B cell (primary cell): ENCODE measurements at regions of chr12 and their contacts with region 1.

Region 1: GRCh38 chr12:79997096-79997791 is 62.3 kb upstream of the PPP1R12A start:
- DNase-seq: peak; percentile 64
- ATAC-seq: peak; percentile 67
- H3K4me3 ChIP-seq: no peak overlapping the region
- H3K4me3 Mint-ChIP-seq: no peak overlapping the region
- H3K27ac ChIP-seq: no peak overlapping the region
- H3K27ac Mint-ChIP-seq: no peak overlapping the region
- H3K4me1 ChIP-seq: peaks cover 2 to 8% of the 10 kb centered on the region in 2 donors
- H3K4me1 Mint-ChIP-seq: peaks cover 8% of the 10 kb centered on the region
- H3K27me3 ChIP-seq: no peaks in the 10 kb centered on the region
- H3K27me3 Mint-ChIP-seq: peaks cover 4% of the 10 kb centered on the region
- CTCF ChIP-seq: no peak

Region 2: GRCh38 chr12:78260976-78261375 is 1736.3 kb before region 1 on chr12:
- CTCF ChIA-PET with region 1: no interaction called
- POLR2A ChIA-PET with region 1: no interaction called
- intact Hi-C with region 1: no loop called
- DNase-seq: no peak
- ATAC-seq: no peak
- H3K4me3 ChIP-seq: no peak overlapping the region
- H3K4me3 Mint-ChIP-seq: no peak overlapping the region
- H3K27ac ChIP-seq: no peak overlapping the region
- H3K27ac Mint-ChIP-seq: no peak overlapping the region
- H3K4me1 ChIP-seq: no peaks in the 10 kb centered on the region
- H3K4me1 Mint-ChIP-seq: no peaks in the 10 kb centered on the region
- H3K27me3 ChIP-seq: no peaks in the 10 kb centered on the region
- H3K27me3 Mint-ChIP-seq: no peaks in the 10 kb centered on the region
- CTCF ChIP-seq: no peak

Region 3: DNA sequence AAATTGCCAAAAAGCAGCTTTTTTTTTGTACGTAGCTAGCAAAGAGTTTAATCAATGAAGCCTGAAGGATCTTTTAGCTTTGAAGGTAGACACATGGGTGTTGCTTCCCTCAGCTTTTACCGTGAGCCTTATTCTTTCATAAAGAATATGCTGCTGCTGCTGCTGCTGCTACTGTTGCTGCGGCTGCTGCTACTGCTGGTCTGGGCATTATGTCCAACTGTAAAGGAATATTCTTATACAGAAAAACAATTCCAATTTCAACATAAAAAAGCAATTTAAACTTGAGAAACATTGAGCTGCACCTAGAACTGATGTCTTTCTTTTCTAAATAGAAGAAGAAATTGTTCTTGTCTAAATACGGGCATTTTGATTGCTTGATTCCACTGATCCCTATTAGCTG is 23.4 kb before region 1 on chr12:
- CTCF ChIA-PET with region 1: no interaction called
- POLR2A ChIA-PET with region 1: no interaction called
- intact Hi-C with region 1: loop called (anchors 2 kb)
- DNase-seq: no peak
- ATAC-seq: no peak
- H3K4me3 ChIP-seq: no peak overlapping the region
- H3K4me3 Mint-ChIP-seq: no peak overlapping the region
- H3K27ac ChIP-seq: no peak overlapping the region
- H3K27ac Mint-ChIP-seq: no peak overlapping the region
- H3K4me1 ChIP-seq: no peaks in the 10 kb centered on the region
- H3K4me1 Mint-ChIP-seq: no peaks in the 10 kb centered on the region
- H3K27me3 ChIP-seq: no peaks in the 10 kb centered on the region
- H3K27me3 Mint-ChIP-seq: peaks cover 10% of the 10 kb centered on the region
- CTCF ChIP-seq: no peak